PC-9 (cell line): ENCODE measurements at regions of chr2 and their contacts with region 1.

Region 1: DNA sequence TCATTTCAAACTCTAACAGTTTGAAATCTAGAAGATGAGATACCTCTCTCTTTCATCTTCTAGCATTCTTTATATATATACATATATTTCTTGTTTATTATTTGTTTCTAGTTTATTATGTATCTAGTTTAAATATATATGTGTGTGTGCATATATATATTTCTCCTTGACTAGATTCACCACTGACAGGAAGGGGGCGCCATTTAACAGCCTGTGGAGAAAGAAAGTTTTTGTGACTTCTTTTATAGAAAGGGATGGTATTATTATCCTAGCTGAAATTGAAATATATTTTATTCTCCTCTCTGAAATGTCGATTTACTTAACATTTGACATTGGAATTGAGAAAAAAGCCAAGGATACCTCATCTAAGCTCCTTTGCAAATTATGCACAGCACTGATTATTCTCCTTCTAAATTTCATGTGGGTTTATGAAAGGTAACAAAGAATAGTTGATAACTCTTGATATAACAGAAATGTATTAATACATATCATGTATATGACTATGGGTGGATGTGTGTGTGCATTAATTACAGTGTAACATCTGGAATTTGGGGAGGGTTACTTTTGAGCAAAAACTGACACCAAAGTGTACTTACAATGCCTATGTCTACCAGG is 160.7 kb upstream of the NT5C1B start:
- DNase-seq: peak; percentile 47 to 51
- H3K4me3 ChIP-seq: no peak overlapping the region
- H3K27ac ChIP-seq: no peak overlapping the region
- H3K4me1 ChIP-seq: peaks cover 31% of the 10 kb centered on the region
- H3K27me3 ChIP-seq: no peaks in the 10 kb centered on the region
- CTCF ChIP-seq: peak; percentile 95

Region 2: DNA sequence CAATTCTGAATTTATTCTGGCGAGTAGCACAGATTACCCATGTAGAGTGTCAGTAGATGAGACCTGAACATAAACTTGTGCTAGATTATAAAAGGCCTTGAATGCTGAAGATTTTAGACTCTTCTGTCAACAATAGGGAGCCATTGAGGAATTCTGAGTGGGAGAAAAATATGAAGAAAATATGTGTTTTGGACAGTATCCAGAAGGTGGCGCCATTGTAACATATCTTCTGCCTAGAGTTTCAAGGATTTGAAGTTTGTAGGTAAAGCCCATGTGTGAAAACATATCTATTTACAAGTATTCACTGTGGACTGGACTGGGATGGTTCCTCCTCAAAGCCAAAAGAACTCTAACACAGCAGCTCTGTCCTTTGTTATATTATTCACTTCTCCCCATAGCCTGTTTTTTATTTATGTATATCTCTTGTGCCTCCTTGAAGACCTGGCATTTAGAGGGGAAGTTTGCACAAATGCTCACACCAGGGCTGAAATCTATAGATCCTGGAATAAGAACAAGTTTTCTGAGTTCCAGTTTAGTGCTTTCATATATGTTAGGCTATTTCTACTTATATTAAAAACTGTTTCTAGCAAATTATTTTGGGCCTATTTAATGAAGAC is 314.5 kb before region 1 on chr2:
- CTCF ChIA-PET with region 1: no interaction called
- POLR2A ChIA-PET with region 1: no interaction called
- intact Hi-C with region 1: loop called (anchors 10 kb)
- DNase-seq: peak; percentile 25 to 45
- H3K4me3 ChIP-seq: no peak overlapping the region
- H3K27ac ChIP-seq: no peak overlapping the region
- H3K4me1 ChIP-seq: no peaks in the 10 kb centered on the region
- H3K27me3 ChIP-seq: no peaks in the 10 kb centered on the region
- CTCF ChIP-seq: peak; percentile 90

Region 3: DNA sequence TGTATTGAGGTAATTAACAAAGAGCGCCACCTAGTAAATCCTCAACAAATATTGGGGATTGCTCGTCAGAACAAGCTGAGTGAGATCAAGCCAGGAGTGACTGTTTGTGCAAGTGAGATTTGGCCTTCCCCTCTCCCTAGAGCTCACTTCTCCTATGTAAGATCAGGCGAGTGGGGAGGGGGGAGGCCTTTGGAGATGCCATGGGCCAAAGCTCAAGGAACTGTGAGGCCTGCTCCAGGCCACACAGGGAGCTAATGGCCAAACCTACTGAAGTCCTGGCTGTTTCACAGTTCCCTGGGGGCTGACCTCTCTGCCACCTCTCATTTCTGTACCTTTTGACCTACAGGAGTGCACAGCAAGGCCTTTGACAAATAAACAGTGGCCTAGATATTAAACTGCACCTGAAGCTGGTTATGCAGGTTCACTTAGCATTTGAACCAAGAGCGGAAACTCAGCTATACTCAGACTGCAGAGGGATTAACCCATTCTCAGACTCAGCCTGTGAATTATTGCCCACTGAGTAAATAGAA is 74.3 kb after region 1 on chr2:
- CTCF ChIA-PET with region 1: interaction called, 3 read pairs
- POLR2A ChIA-PET with region 1: no interaction called
- intact Hi-C with region 1: loop called (anchors 1 kb)
- DNase-seq: peak; percentile 67 to 96
- H3K4me3 ChIP-seq: no peak overlapping the region
- H3K27ac ChIP-seq: peak overlapping the region; percentile 57
- H3K4me1 ChIP-seq: peaks cover 63% of the 10 kb centered on the region
- H3K27me3 ChIP-seq: no peaks in the 10 kb centered on the region
- CTCF ChIP-seq: peak; percentile 46; the same call in 1 of the 2 replicates

Region 4: DNA sequence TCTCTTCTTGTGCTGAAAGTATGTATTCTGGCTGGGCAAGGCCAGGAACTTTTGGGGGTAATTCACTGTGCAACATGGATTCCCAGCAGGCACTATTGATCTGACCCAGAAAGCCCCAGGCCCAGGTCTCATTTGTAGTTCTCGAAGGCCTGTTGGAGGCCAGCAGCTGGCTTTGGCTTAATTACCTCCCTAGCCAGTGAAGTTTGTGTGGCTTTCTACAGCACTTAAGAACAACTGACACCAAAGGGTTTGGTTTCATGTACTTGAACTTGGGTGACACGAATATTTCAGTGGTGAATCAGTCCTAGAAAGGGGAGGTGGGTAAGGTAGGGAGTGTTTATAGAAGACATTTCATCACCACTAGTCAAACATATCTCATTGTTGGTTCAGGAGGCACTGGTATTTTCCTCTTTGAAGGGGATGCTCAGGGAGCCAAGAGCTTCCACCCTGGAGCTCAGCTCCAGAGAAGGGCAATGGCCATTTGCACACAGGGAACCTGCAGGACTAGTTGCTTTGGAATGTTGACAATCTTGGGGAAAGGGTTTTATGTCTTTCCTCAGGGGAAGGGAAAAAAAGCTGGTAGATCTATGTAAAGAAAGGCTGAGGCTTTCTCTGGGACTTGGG is 390.7 kb after region 1 on chr2:
- CTCF ChIA-PET with region 1: no interaction called
- POLR2A ChIA-PET with region 1: no interaction called
- intact Hi-C with region 1: loop called (anchors 5 kb)
- DNase-seq: peak; percentile 83 to 100
- H3K4me3 ChIP-seq: no peak overlapping the region; the same call in 1 of the 2 replicates
- H3K27ac ChIP-seq: peak overlapping the region; percentile 88
- H3K4me1 ChIP-seq: peaks cover 48% of the 10 kb centered on the region
- H3K27me3 ChIP-seq: no peaks in the 10 kb centered on the region
- CTCF ChIP-seq: no peak

Region 5: GRCh38 chr2:19611491-19612332 is 861.7 kb after region 1 on chr2:
- CTCF ChIA-PET with region 1: no interaction called
- POLR2A ChIA-PET with region 1: no interaction called
- intact Hi-C with region 1: no loop called
- DNase-seq: peak; percentile 58 to 98
- H3K4me3 ChIP-seq: peak overlapping the region; percentile 9; the same call in 1 of the 2 replicates
- H3K27ac ChIP-seq: peak overlapping the region; percentile 98
- H3K4me1 ChIP-seq: peaks cover 85% of the 10 kb centered on the region
- H3K27me3 ChIP-seq: no peaks in the 10 kb centered on the region
- CTCF ChIP-seq: no peak

Region 6: DNA sequence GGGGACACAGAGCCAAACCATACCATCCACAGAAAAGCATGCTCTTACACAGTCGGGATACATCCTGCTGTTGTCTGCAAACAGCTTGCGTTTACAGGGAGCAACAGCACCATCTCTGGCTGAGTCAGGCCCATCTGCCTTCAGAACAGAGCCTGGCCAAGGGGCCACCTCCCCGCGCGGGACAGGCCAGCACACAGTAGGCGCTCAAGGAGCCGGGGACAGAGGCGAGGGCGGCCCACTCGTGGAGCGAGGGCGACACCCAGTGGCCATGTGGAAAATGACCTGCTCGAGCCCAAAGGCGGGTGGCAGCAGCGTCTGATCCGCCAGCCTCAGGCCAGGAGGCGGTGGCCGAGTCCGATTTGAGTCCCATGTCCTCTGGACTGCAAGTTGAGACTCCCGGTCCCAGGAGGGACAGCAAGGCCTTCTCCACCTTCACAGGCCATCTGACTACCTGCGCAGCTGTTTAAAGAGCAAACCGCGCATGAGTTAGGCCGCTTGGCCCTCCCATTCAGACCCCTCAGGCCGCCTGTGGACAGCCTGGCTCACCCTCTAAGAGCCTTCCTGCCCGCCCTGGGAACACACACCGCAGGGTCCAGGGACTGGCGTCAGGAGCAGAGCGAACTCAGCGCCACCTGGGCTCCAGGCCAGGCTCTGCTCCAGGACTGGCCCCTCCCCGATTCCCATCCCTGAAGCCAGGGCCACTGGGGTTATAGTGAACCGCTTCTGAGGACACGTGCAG is 1113.5 kb after region 1 on chr2:
- CTCF ChIA-PET with region 1: no interaction called
- POLR2A ChIA-PET with region 1: no interaction called
- intact Hi-C with region 1: loop called (anchors 2 kb)
- DNase-seq: peak in 1 of 2 experiments; percentile 58
- H3K4me3 ChIP-seq: no peak overlapping the region
- H3K27ac ChIP-seq: no peak overlapping the region
- H3K4me1 ChIP-seq: peaks cover 14% of the 10 kb centered on the region
- H3K27me3 ChIP-seq: no peaks in the 10 kb centered on the region
- CTCF ChIP-seq: peak; percentile 98